GM12878 (cell line): ENCODE measurements at regions of chr12 and their contacts with region 1.

Region 1: GRCh38 chr12:48995061-48995879 is 3.9 kb downstream of the DDN start:
- DNase-seq: no peak
- ATAC-seq: peak; percentile 31
- H3K4me3 ChIP-seq: no peak overlapping the region
- H3K27ac ChIP-seq: no peak overlapping the region
- H3K4me1 ChIP-seq: peaks cover 29% of the 10 kb centered on the region
- H3K27me3 ChIP-seq: no peaks in the 10 kb centered on the region; a peak in 1 of 4 replicates
- CTCF ChIP-seq: peak; percentile 68 to 84 (median 82)
- EP300 ChIP-seq: no peak
- POLR2A ChIP-seq: no peak
- RAD21 ChIP-seq: peak; percentile 62

Region 2: GRCh38 chr12:48903982-48904411 is 91.3 kb before region 1 on chr12:
- CTCF ChIA-PET with region 1: interaction called, 11 read pairs
- POLR2A ChIA-PET with region 1: interaction called, 3 read pairs
- RAD21 ChIA-PET with region 1: interaction called, 4 read pairs
- SMC1A ChIA-PET with region 1: interaction called, 4 read pairs
- in situ Hi-C with region 1: no loop called
- intact Hi-C with region 1: loop called (anchors 5 kb)
- DNase-seq: peak; percentile 20
- ATAC-seq: peak; percentile 97
- H3K4me3 ChIP-seq: peak overlapping the region; percentile 40; the same call in 1 of the 2 replicates
- H3K27ac ChIP-seq: no peak overlapping the region
- H3K4me1 ChIP-seq: peaks cover 8% of the 10 kb centered on the region; the same call in 1 of the 2 replicates
- H3K27me3 ChIP-seq: no peaks in the 10 kb centered on the region; a peak in 1 of 4 replicates
- CTCF ChIP-seq: peak; percentile 66 to 81 (median 75)
- EP300 ChIP-seq: no peak
- POLR2A ChIP-seq: no peak
- RAD21 ChIP-seq: peak; percentile 41

Region 3: DNA sequence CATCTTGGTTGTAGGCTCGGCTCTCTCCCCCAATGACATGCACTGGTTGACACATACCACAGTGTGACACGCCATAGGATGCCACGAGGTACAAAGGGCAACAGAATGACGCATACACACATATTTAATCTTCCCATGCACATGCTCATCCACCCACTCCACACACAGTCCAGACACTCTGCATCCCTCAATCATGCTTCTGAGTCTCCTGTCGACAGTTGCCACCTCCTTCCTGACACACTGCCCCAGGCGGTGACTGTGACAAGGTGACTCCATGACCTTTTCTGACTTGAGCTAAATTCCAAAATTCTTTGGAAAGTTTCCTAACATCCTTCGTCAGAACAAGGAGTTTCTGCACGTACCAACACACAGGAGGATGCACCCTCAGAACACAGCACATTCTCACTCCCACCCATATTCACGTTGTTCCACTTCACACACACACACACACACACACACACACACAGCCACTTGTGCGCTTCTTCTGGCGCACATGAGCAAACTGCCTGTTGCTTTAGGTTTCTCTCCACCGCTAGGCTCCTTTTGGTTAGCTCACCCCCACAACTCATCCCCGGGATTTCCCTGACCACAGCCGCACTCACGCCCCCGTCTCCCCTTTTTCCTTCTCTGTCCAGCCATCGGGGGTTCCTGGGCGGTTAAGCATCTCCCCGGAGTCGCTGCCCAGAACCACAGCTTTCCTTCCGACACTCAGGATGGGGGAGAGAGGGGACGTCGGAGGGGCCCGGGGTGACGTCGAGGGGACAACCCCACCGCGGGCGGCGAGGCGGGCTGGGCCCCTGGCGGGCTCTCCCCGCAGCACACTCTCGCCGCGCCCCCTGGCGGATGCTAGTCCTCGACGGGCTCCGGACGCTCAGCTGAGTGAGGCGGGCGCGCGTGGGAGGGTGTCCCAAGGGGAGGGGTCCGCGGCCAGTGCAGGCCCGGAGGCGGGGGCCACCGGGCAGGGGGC is 17.7 kb before region 1 on chr12:
- CTCF ChIA-PET with region 1: interaction called, 106 read pairs
- POLR2A ChIA-PET with region 1: interaction called, 3 read pairs
- RAD21 ChIA-PET with region 1: interaction called, 6 read pairs
- SMC1A ChIA-PET with region 1: interaction called, 6 read pairs
- in situ Hi-C with region 1: no loop called
- intact Hi-C with region 1: no loop called
- DNase-seq: no peak
- ATAC-seq: peak; percentile 84
- H3K4me3 ChIP-seq: no peak overlapping the region; the same call in 1 of the 2 replicates
- H3K27ac ChIP-seq: no peak overlapping the region
- H3K4me1 ChIP-seq: peaks cover 35% of the 10 kb centered on the region
- H3K27me3 ChIP-seq: peaks cover 37 to 44% of the 10 kb centered on the region in 2 experiments
- CTCF ChIP-seq: peak; percentile 61 to 82 (median 70); a peak in 5 of 6 replicates
- EP300 ChIP-seq: no peak; a peak in 1 of 4 replicates
- POLR2A ChIP-seq: no peak
- RAD21 ChIP-seq: peak; percentile 50

Region 4: DNA sequence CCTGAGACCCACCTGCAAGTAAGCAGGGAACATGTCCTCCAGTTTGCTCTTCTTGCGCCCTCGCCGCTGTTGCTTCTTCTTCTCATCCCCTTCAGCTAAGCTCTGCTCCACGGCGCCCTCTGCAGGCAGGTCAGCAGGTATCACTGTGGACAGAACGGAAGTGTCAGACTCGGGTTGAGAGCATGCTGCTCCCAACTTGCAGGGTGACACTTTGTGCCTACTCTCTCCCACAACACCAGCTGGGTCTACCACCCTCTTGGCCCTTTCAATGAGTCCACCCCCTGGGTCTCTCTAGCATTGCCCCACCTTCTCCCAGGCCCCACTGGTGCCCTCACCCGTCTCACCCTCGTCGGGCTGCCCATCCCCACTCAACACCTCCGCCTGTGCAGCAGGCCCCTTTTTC is 48.6 kb after region 1 on chr12:
- CTCF ChIA-PET with region 1: interaction called, 44 read pairs
- POLR2A ChIA-PET with region 1: interaction called, 5 read pairs
- RAD21 ChIA-PET with region 1: interaction called, 14 read pairs
- SMC1A ChIA-PET with region 1: interaction called, 19 read pairs
- in situ Hi-C with region 1: no loop called
- intact Hi-C with region 1: no loop called
- DNase-seq: no peak
- ATAC-seq: peak; percentile 87
- H3K4me3 ChIP-seq: no peak overlapping the region
- H3K27ac ChIP-seq: no peak overlapping the region
- H3K4me1 ChIP-seq: no peaks in the 10 kb centered on the region
- H3K27me3 ChIP-seq: no peaks in the 10 kb centered on the region
- CTCF ChIP-seq: peak; percentile 60 to 82 (median 77)
- EP300 ChIP-seq: no peak
- POLR2A ChIP-seq: no peak
- RAD21 ChIP-seq: peak; percentile 38

Region 5: GRCh38 chr12:49088190-49088931 is 93.1 kb after region 1 on chr12:
- CTCF ChIA-PET with region 1: interaction called, 58 read pairs
- POLR2A ChIA-PET with region 1: interaction called, 4 read pairs
- RAD21 ChIA-PET with region 1: interaction called, 11 read pairs
- SMC1A ChIA-PET with region 1: interaction called, 6 read pairs
- in situ Hi-C with region 1: no loop called
- intact Hi-C with region 1: loop called (anchors 5 kb)
- DNase-seq: peak; percentile 44
- ATAC-seq: peak; percentile 96
- H3K4me3 ChIP-seq: 0 out of 2 replicates have a peak overlapping the region, but pooled peaks have one; percentile 5
- H3K27ac ChIP-seq: no peak overlapping the region
- H3K4me1 ChIP-seq: peaks cover 3% of the 10 kb centered on the region; the same call in 1 of the 2 replicates
- H3K27me3 ChIP-seq: peaks cover 27 to 35% of the 10 kb centered on the region in 2 experiments; a peak in 3 of 4 replicates
- CTCF ChIP-seq: peak; percentile 92 to 95 (median 94)
- EP300 ChIP-seq: no peak
- POLR2A ChIP-seq: peak; percentile 31; the same call in 1 of the 2 replicates
- RAD21 ChIP-seq: peak; percentile 76

Region 6: GRCh38 chr12:49110464-49111155 is 115.3 kb after region 1 on chr12 and contains the start of gene LMBR1L:
- CTCF ChIA-PET with region 1: interaction called, 4 read pairs
- POLR2A ChIA-PET with region 1: interaction called, 11 read pairs
- RAD21 ChIA-PET with region 1: interaction called, 5 read pairs
- SMC1A ChIA-PET with region 1: interaction called, 3 read pairs
- in situ Hi-C with region 1: no loop called
- intact Hi-C with region 1: no loop called
- DNase-seq: peak; percentile 93
- ATAC-seq: peak; percentile 98
- H3K4me3 ChIP-seq: peak within 1 kb of the TSS; percentile 87
- H3K27ac ChIP-seq: peak within 1 kb of the TSS; percentile 70
- H3K4me1 ChIP-seq: peaks cover 9% of the 10 kb centered on the region
- H3K27me3 ChIP-seq: no peaks in the 10 kb centered on the region
- CTCF ChIP-seq: peak; percentile 36 to 60 (median 50); a peak in 5 of 6 replicates
- EP300 ChIP-seq: no peak
- POLR2A ChIP-seq: peak; percentile 91
- RAD21 ChIP-seq: 0 out of 2 replicates have a peak, but pooled peaks have one; percentile 32
- polyA plus RNA-seq, gene LMBR1L: 2.1 to 2.8 TPM

Region 7: GRCh38 chr12:49557917-49558215 is 562.6 kb after region 1 on chr12:
- CTCF ChIA-PET with region 1: no interaction called
- POLR2A ChIA-PET with region 1: no interaction called
- RAD21 ChIA-PET with region 1: no interaction called
- SMC1A ChIA-PET with region 1: no interaction called
- in situ Hi-C with region 1: no loop called
- intact Hi-C with region 1: no loop called
- DNase-seq: no peak
- ATAC-seq: no peak
- H3K4me3 ChIP-seq: no peak overlapping the region
- H3K27ac ChIP-seq: no peak overlapping the region
- H3K4me1 ChIP-seq: no peaks in the 10 kb centered on the region
- H3K27me3 ChIP-seq: no peaks in the 10 kb centered on the region
- CTCF ChIP-seq: peak in 2 of 3 experiments; percentile 11 to 17; a peak in 1 of 6 replicates
- EP300 ChIP-seq: no peak
- POLR2A ChIP-seq: no peak
- RAD21 ChIP-seq: no peak